ENCODE measurements at regions of chr12 and their contacts with region 1.

Region 1: DNA sequence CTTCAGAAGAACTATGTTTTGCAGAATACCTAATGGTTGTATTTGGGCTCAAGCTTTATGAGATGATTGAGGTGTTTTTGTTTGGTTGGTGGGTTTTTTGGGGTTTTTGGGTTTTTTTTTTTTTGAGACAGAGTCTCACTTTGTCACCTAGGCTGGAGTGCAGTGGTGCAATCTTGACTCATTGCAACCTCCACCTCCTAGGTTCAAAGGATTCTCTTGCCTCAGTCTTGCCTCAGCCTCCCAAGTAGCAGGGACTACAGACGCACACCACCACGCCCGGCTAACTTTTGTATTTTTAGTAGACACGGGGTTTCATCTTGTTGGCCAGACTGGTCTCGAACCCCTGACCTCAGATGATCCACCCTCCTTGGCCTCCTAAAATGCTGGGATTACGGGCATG is 39.6 kb downstream of the ARL1 start:
- DNase-seq: no peak
- ATAC-seq: no peak
- H3K4me3 ChIP-seq: no peak overlapping the region
- H3K27ac ChIP-seq: no peak overlapping the region
- H3K4me1 ChIP-seq: peaks cover 0 to 3% (median 0%) of the 10 kb centered on the region in 9 donors
- H3K27me3 ChIP-seq: no peaks in the 10 kb centered on the region
- CTCF ChIP-seq: no peak

Region 2: GRCh38 chr12:101305226-101305779 is 62.7 kb before region 1 on chr12:
- intact Hi-C with region 1: loop called in 1 of 10 experiments (anchors 5 kb)
- DNase-seq: no peak
- ATAC-seq: no peak
- H3K4me3 ChIP-seq: no peak overlapping the region
- H3K27ac ChIP-seq: no peak overlapping the region
- H3K4me1 ChIP-seq: no peaks in the 10 kb centered on the region
- H3K27me3 ChIP-seq: no peaks in the 10 kb centered on the region
- CTCF ChIP-seq: no peak

Region 3: GRCh38 chr12:101351682-101352081 is 16.3 kb before region 1 on chr12:
- intact Hi-C with region 1: no loop called
- DNase-seq: no peak
- ATAC-seq: no peak
- H3K4me3 ChIP-seq: no peak overlapping the region
- H3K27ac ChIP-seq: no peak overlapping the region
- H3K4me1 ChIP-seq: no peaks in the 10 kb centered on the region
- H3K27me3 ChIP-seq: no peaks in the 10 kb centered on the region
- CTCF ChIP-seq: no peak